Tibial artery (tissue), 4 donors: ENCODE measurements at regions of chr16 and their contacts with region 1.

Region 1: DNA sequence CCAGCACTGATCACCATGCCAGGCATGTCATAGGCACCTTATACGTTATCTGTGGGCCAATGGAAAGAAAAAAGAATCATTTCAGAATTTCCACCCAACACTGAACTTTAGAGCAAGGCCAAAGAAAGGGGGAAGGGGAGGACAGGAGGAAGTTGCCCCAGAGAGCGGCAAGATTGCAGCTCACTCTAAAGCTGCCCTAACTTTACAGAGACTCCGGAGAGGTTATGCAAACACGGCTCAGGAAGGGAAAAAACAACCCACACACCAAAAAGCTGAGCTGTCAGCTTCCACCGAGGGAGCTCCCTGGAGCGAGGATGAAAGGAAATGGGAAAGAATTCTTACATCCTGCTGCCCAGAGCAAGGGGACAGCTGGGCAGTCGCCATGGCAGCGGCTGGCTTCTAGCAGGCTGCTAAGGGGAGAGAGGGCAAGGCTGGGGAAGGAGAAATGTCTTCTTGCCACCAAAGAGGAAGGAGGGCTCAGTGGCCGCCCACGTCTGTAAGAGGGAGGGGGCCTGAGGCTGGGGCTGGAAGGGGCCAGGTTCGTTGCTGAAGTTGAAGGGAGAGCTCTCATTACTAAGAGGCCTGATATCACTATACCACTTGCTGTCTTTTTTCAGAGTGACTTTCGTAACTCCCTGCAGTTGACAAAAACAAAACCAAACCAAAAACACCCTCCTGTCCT is 18.2 kb downstream of the COTL1 start:
- DNase-seq: peak; percentile 58 to 76
- H3K4me3 ChIP-seq: peak overlapping the region in 1 of 2 donors; percentile 29
- H3K27ac ChIP-seq: peak overlapping the region; percentile 6 to 51
- H3K4me1 ChIP-seq: peaks cover 6 to 30% (median 21%) of the 10 kb centered on the region in 4 donors
- H3K27me3 ChIP-seq: no peaks in the 10 kb centered on the region
- CTCF ChIP-seq: no peak

Region 2: GRCh38 chr16:82753821-82754220 is 1845.8 kb before region 1 on chr16:
- intact Hi-C with region 1: loop called (anchors 5 kb)
- DNase-seq: no peak
- H3K4me3 ChIP-seq: no peak overlapping the region
- H3K27ac ChIP-seq: no peak overlapping the region
- H3K4me1 ChIP-seq: peaks cover 0 to 25% (median 15%) of the 10 kb centered on the region in 4 donors
- H3K27me3 ChIP-seq: no peaks in the 10 kb centered on the region
- CTCF ChIP-seq: no peak

Region 3: GRCh38 chr16:84489131-84489530 is 110.5 kb before region 1 on chr16:
- intact Hi-C with region 1: no loop called
- DNase-seq: no peak
- H3K4me3 ChIP-seq: no peak overlapping the region
- H3K27ac ChIP-seq: no peak overlapping the region
- H3K4me1 ChIP-seq: no peaks in the 10 kb centered on the region
- H3K27me3 ChIP-seq: no peaks in the 10 kb centered on the region
- CTCF ChIP-seq: no peak

Region 4: GRCh38 chr16:84532291-84532724 is 67.4 kb before region 1 on chr16:
- intact Hi-C with region 1: loop called (anchors 5 kb)
- DNase-seq: peak; percentile 69 to 83
- H3K4me3 ChIP-seq: no peak overlapping the region
- H3K27ac ChIP-seq: peak overlapping the region in 1 of 2 donors; percentile 35
- H3K4me1 ChIP-seq: peaks cover 0 to 33% (median 29%) of the 10 kb centered on the region in 4 donors
- H3K27me3 ChIP-seq: no peaks in the 10 kb centered on the region
- CTCF ChIP-seq: no peak